PC-3 (cell line): ENCODE measurements at regions of chr14 and their contacts with region 1.

Region 1: GRCh38 chr14:68377459-68377858 is 415.4 kb downstream of the ZFP36L1 start:
- DNase-seq: no peak
- ATAC-seq: no peak
- H3K4me3 ChIP-seq: no peak overlapping the region
- H3K27ac ChIP-seq: no peak overlapping the region
- H3K4me1 ChIP-seq: peaks cover 33% of the 10 kb centered on the region
- H3K27me3 ChIP-seq: no peaks in the 10 kb centered on the region
- CTCF ChIP-seq: no peak

Region 2: DNA sequence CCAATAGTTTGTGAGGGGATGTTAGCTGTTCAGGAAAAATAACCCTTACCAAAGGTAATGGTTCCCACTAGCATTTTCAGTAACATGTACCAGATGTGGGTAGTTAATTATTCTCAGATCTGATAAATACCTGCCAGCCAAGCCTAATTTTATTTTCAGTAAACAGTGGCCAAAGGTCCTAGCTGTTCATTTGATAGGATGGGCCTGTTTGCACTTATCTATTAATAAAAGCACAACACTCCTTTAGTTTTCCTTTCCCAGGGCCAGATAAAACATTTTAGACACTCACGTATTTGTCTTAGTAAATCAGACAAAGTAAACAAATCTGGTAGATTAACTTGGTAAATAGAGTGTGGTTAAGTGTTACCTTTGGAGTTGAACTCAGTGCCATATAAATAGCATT is 212.7 kb before region 1 on chr14:
- CTCF ChIA-PET with region 1: no interaction called
- POLR2A ChIA-PET with region 1: no interaction called
- intact Hi-C with region 1: loop called (anchors 5 kb)
- DNase-seq: peak; percentile 54
- ATAC-seq: peak; percentile 75
- H3K4me3 ChIP-seq: no peak overlapping the region
- H3K27ac ChIP-seq: peak overlapping the region; percentile 72
- H3K4me1 ChIP-seq: peaks cover 21% of the 10 kb centered on the region
- H3K27me3 ChIP-seq: no peaks in the 10 kb centered on the region
- CTCF ChIP-seq: no peak

Region 3: DNA sequence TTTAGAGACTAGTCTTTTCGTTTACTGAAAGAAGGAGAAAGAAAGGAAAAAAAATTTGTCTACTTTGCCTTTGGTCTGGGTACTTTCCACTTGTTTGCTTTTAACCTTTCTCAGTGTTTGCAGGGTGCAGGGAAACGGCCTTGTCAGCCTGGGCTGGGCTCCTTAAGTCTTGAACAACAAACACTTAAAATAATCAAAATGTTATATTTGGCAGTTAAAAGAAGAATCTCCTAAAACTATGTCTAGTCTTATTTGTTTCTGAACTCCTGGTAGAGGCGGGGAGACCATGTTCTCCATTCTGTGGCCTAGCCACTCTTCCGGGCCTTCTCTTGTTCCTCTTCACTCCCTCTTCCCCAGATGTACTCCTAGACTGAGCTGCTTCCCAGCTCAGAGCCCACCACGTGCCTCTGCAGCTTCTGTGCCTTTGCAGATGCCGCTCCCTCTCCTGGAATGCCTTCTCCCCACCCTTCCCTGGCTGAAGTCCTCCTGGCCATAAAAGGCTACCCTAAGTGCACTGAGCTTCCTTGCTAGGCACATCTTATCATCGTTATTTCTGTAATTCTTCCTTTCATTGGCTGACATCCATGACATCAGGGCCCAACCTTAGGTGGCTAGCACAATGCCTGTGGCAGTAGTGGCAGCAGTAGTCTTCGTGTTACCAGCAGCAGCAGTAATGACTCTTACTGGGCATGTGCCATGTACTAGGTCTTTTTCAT is 17.5 kb before region 1 on chr14:
- CTCF ChIA-PET with region 1: interaction called, 4 read pairs
- POLR2A ChIA-PET with region 1: interaction called, 3 read pairs
- intact Hi-C with region 1: loop called (anchors 1 kb)
- DNase-seq: peak; percentile 28
- ATAC-seq: peak; percentile 62
- H3K4me3 ChIP-seq: no peak overlapping the region
- H3K27ac ChIP-seq: no peak overlapping the region
- H3K4me1 ChIP-seq: peaks cover 29% of the 10 kb centered on the region
- H3K27me3 ChIP-seq: no peaks in the 10 kb centered on the region
- CTCF ChIP-seq: no peak

Region 4: DNA sequence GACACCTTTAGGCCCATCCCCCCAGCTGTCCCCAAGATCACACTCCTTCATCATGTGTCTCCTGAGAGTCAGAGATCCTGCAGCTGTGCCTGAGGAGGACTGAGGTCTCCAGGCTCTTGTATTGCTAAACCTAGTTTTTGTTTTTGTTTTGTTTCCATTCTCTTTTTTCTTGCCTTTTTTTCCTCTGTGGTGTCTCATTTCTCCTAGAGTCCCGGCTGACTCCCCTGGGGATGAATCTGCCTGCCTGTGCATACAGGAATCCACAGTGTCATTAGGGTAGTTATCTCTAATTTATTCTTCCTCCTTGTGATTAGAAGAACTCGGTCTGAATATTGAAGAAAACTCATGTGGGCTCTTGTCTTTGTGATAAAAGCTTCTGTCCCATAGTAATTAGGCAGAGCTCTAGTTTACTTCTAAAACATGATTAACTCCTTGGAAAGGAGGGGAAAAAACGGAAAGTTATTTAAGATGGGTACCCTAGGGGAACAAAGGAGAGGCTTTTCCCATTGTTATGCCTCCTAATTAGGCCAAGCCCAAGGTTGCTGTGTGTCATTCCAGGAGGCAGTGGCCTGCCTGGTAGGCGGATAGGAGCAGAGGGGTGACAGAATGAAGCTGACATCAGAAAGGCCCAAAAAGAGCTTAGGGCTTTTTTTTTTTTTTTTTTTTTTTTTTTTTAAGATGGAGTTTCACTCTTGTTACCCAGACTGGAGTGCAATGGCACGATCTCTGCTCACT is 72.3 kb after region 1 on chr14:
- CTCF ChIA-PET with region 1: interaction called, 3 read pairs
- POLR2A ChIA-PET with region 1: interaction called, 3 read pairs
- intact Hi-C with region 1: loop called (anchors 1 kb)
- DNase-seq: no peak
- ATAC-seq: no peak
- H3K4me3 ChIP-seq: no peak overlapping the region
- H3K27ac ChIP-seq: no peak overlapping the region
- H3K4me1 ChIP-seq: peaks cover 24% of the 10 kb centered on the region
- H3K27me3 ChIP-seq: no peaks in the 10 kb centered on the region
- CTCF ChIP-seq: no peak

Region 5: GRCh38 chr14:68548194-68549056 is 171.0 kb after region 1 on chr14:
- CTCF ChIA-PET with region 1: no interaction called
- POLR2A ChIA-PET with region 1: no interaction called
- intact Hi-C with region 1: loop called (anchors 1 kb)
- DNase-seq: peak; percentile 97
- ATAC-seq: peak; percentile 82
- H3K4me3 ChIP-seq: peak overlapping the region; percentile 13; the same call in 1 of the 2 replicates
- H3K27ac ChIP-seq: peak overlapping the region; percentile 98
- H3K4me1 ChIP-seq: peaks cover 47% of the 10 kb centered on the region
- H3K27me3 ChIP-seq: no peaks in the 10 kb centered on the region
- CTCF ChIP-seq: no peak

Region 6: GRCh38 chr14:68695326-68695768 is 317.9 kb after region 1 on chr14:
- CTCF ChIA-PET with region 1: no interaction called
- POLR2A ChIA-PET with region 1: no interaction called
- intact Hi-C with region 1: loop called (anchors 2 kb)
- DNase-seq: peak; percentile 99
- ATAC-seq: peak; percentile 95
- H3K4me3 ChIP-seq: no peak overlapping the region
- H3K27ac ChIP-seq: peak overlapping the region; percentile 90
- H3K4me1 ChIP-seq: peaks cover 28% of the 10 kb centered on the region
- H3K27me3 ChIP-seq: no peaks in the 10 kb centered on the region
- CTCF ChIP-seq: no peak

Region 7: DNA sequence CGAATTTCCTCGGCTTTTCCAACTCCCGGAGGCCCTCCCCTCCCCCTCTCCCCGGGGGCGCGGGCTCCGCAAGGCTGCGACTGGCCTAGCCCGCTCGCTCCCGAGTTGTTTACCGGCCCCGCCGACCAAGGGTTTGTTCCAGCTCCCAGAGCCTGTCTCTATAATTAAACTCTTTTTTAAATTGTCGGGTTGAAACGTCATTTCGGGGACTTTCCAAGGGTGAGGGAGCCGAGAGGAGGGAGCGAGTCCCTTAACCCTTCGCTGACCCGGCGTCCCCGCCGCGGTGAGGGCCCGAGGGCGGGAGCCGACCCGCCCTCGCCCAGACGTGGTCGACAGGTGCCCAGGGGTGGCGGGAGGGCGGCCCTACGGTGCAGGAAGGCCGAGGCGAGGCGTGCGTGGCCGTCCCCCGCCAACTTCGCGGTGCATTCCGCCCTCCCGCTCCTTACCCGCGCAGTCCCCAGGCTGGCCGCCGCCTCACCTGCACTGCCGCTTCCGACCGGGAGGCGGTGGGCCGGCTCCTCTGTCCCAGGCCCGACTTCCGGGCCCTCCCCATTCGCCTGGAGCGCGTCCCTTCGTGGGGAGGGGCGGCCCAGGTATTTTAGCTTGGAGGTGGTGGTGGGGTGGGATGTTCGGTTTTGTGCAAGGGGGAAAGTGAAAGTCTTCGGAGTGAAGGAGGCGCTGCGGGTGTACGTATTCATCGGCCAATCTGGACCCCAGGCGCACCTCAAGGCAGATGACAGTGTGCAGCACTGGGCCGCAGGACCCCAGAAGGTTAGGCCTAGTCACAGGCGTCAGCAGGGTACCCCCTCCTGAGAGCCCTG is 418.3 kb after region 1 on chr14:
- CTCF ChIA-PET with region 1: no interaction called
- POLR2A ChIA-PET with region 1: interaction called, 29 read pairs
- intact Hi-C with region 1: loop called (anchors 1 kb)
- DNase-seq: peak; percentile 84
- ATAC-seq: peak; percentile 55
- H3K4me3 ChIP-seq: peak overlapping the region; percentile 90
- H3K27ac ChIP-seq: peak overlapping the region; percentile 97
- H3K4me1 ChIP-seq: peaks cover 19% of the 10 kb centered on the region
- H3K27me3 ChIP-seq: no peaks in the 10 kb centered on the region
- CTCF ChIP-seq: peak; percentile 66